Esophagus squamous epithelium (tissue), 5 donors: ENCODE measurements at regions of chr17 and their contacts with region 1.

Region 1: DNA sequence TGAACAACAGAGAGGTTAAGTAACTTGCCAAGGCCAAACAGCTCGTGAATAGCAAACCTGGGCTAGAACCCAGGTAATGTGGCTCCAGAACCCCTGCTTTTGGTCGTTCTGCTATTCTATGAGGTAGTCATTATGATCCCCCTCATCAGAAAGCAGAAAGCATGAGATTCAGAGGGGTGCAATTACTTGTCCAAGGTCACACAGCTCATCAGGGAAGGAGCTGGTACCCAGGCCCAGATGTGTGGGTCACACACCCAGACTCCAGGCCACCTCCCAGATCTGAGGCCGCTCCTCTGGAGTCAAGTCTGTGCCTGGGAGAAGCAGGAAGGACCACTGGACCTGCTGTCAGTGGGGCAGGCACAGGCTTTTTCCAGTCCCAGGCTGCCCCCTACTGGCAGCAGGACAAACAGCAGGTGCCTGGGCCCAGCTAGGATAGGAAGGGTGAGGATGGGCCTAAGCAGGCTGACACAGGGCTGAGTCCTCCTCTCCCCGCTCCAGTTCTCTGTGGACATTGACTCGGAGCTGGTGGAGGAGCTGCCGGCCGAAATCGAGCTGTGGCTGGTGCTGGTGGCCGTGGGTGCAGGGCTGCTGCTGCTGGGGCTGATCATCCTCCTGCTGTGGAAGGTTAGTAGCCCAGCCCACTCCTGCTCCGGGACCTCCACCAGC is 7.8 kb upstream of the PDK2 start:
- DNase-seq: no peak
- H3K4me3 ChIP-seq: no peak overlapping the region
- H3K27ac ChIP-seq: no peak overlapping the region
- H3K4me1 ChIP-seq: no peaks in the 10 kb centered on the region
- H3K27me3 ChIP-seq: no peaks in the 10 kb centered on the region
- CTCF ChIP-seq: peak; percentile 89 to 96 (median 92)
- POLR2A ChIP-seq: no peak

Region 2: GRCh38 chr17:50026901-50027630 is 60.3 kb before region 1 on chr17:
- intact Hi-C with region 1: loop called (anchors 5 kb)
- DNase-seq: no peak
- H3K4me3 ChIP-seq: peak overlapping the region in 3 of 4 donors; percentile 26 to 54 (median 30)
- H3K27ac ChIP-seq: peak overlapping the region in 3 of 4 donors; percentile 22 to 68 (median 50)
- H3K4me1 ChIP-seq: peaks cover 15 to 22% (median 18%) of the 10 kb centered on the region in 3 donors
- H3K27me3 ChIP-seq: peaks cover 0 to 7% (median 0%) of the 10 kb centered on the region in 4 donors
- CTCF ChIP-seq: peak; percentile 79 to 98 (median 97)
- POLR2A ChIP-seq: no peak